Mammary epithelial cell (primary cell): ENCODE measurements at regions of chrX and their contacts with region 1.

Region 1: GRCh38 chrX:138775517-138775916 is 64.0 kb upstream of the FGF13 start:
- DNase-seq: peak; percentile 25
- H3K4me3 ChIP-seq: no peak overlapping the region
- H3K27ac ChIP-seq: no peak overlapping the region
- H3K4me1 ChIP-seq: no peaks in the 10 kb centered on the region
- H3K27me3 ChIP-seq: no peaks in the 10 kb centered on the region
- CTCF ChIP-seq: peak; percentile 37 to 44

Region 2: GRCh38 chrX:139759637-139760036 is 984.1 kb after region 1 on chrX:
- CTCF ChIA-PET with region 1: no interaction called
- dilution Hi-C with region 1: no loop called
- in situ Hi-C with region 1: no loop called
- intact Hi-C with region 1: loop called (anchors 2 kb)
- DNase-seq: peak; percentile 15
- H3K4me3 ChIP-seq: no peak overlapping the region
- H3K27ac ChIP-seq: no peak overlapping the region
- H3K4me1 ChIP-seq: peaks cover 7% of the 10 kb centered on the region
- H3K27me3 ChIP-seq: no peaks in the 10 kb centered on the region
- CTCF ChIP-seq: peak; percentile 37 to 48

Region 3: DNA sequence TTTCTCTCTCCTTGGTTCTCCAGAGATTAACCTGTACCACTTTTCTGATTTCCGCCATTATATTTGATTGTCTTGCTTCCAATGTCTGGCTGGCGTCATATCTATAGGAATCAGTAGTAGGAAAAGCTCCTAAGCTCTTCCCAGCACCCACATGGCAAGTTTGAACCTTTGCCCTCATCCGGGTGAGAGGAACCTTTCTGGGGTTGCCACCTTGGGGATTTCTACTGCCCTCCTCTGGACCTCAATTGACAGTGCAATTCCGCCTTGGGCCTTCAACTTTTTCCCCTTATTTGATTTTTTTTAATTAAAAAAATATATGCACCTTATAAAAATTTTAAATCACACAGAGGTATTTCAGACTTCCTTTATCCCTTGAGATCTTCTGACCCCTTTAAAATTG is 1191.8 kb after region 1 on chrX:
- CTCF ChIA-PET with region 1: no interaction called
- dilution Hi-C with region 1: no loop called
- in situ Hi-C with region 1: no loop called
- intact Hi-C with region 1: loop called (anchors 10 kb)
- DNase-seq: no peak
- H3K4me3 ChIP-seq: no peak overlapping the region
- H3K27ac ChIP-seq: no peak overlapping the region
- H3K4me1 ChIP-seq: no peaks in the 10 kb centered on the region
- H3K27me3 ChIP-seq: no peaks in the 10 kb centered on the region
- CTCF ChIP-seq: peak; percentile 17 to 42